PC-9 (cell line): ENCODE measurements at regions of chr10 and their contacts with region 1.

Region 1: DNA sequence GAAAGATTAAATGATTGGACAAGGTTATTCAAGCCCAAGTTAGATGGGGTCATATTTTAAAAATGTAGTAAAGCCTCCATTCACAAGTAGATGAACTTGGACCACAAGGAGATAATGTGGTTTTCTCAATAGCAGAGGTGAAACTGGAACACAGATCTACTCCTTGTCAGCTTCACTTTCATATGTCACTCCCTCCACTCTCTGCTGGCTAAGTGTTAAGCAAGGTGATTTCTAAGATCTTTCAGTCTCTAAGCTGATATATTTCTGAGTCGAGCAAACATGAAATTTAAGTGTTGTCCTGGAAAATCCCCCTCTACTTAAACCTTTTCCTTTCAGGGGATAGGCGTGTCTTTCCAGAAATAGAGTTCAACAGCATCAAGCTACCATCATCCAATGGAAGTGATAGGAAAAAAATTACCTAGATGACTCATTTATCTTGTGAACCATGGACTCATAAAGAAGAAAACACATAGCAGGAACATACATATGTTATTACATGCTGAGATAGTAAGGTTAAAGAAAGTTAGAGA is 275.0 kb downstream of the PTEN start:
- DNase-seq: no peak
- H3K4me3 ChIP-seq: no peak overlapping the region
- H3K27ac ChIP-seq: no peak overlapping the region
- H3K4me1 ChIP-seq: peaks cover 12% of the 10 kb centered on the region; the same call in 1 of the 2 replicates
- H3K27me3 ChIP-seq: no peaks in the 10 kb centered on the region
- CTCF ChIP-seq: no peak

Region 2: DNA sequence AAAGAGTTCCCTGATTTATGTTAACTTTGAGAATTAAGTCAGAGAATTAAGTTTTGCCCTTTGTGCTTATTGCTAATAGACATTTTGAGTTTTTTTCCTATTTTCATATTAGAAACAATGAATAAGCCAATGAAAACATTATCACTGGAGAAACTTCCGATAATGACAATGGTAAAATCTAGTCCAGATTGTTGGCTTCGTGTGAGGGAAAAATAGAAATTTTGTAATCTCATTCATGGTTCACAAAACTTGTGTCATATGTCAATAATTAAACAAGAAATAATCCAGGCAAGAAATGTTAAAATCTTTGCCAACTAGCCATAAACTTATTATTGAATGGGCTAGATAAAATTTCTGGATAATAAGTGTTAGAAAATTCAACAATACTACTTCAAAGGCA is 408.1 kb after region 1 on chr10:
- CTCF ChIA-PET with region 1: no interaction called
- POLR2A ChIA-PET with region 1: no interaction called
- intact Hi-C with region 1: loop called (anchors 5 kb)
- DNase-seq: no peak
- H3K4me3 ChIP-seq: no peak overlapping the region
- H3K27ac ChIP-seq: no peak overlapping the region
- H3K4me1 ChIP-seq: no peaks in the 10 kb centered on the region
- H3K27me3 ChIP-seq: no peaks in the 10 kb centered on the region
- CTCF ChIP-seq: no peak